Gastrocnemius medialis (tissue), 4 donors: ENCODE measurements at regions of chr17 and their contacts with region 1.

Region 1: DNA sequence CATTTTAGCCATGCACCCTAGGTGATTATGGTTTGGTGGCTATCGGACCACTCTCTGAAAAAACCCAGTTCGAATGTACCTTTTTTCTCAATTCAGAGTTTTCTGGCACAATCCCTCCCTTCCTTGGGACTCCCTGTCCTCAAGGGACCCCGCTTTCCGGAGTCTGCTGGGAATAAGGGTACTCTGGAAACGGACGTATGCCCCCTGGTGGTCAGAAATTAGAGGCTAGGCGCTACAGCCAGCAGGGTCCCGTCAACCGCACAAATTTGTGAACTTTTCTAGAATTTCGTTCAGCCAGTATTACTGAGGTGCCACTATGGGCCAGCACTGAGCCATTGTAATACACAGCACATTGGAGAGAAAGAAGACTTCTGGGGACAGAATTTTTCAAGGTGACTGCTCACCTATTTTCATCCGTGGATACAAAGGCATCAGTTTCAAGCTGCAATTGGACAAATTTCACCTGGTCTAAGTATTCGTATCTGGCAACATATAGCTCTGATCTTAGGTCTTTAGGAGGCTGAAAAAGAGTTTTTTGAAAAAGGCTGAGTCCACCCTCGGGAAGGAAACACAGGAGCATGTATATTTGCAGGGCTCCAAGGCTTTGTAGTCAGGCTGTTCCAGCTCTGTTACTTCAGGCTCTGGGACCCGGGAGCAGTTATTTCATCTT is 27.1 kb upstream of the CRYBA1 start:
- DNase-seq: peak; percentile 26 to 49
- ATAC-seq: peak; percentile 77 to 80
- H3K4me3 ChIP-seq: no peak overlapping the region
- H3K27ac ChIP-seq: no peak overlapping the region
- H3K4me1 ChIP-seq: peaks cover 6 to 10% of the 10 kb centered on the region in 2 donors
- H3K27me3 ChIP-seq: no peaks in the 10 kb centered on the region
- CTCF ChIP-seq: peak; percentile 77 to 93 (median 89)
- POLR2A ChIP-seq: no peak

Region 2: DNA sequence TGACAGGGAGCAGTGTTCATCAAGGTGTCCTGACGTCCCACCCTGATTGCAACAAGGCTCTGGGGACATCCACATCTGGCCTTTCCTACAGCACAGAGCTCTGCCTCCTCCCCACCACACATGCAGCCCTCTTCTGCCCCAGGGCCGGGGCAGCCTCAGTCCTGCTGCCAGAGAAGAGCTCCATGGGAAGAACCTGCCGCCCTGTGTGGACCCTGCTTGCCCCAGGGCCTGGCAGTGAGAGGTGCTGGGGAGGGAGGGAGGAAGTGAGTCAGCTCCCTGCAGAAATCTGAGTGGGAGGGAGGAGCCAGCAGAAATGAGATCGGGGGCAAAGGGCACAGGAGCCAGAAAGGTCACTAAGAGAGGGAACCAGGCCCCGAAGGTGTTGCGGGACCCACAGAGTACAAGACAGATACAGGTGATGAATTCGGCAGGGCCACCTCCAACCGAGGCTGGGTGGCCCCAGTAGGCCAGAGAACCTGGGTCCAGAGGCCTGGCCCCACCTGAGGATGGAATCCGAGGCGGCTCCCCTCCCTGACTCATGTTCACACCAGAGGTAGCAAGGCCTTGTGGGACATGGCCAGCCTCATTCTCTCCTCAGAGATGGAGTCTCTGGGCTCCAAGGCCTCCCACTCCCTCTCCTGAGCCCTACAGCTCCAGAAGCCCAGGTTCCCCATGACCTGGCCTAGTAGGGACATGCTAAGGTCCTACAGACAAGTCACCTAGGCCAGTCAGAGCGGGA is 64.1 kb before region 1 on chr17:
- in situ Hi-C with region 1: loop called in 1 of 4 experiments (anchors 10 kb)
- intact Hi-C with region 1: no loop called
- DNase-seq: no peak
- ATAC-seq: peak; percentile 63 to 85
- H3K4me3 ChIP-seq: peak overlapping the region in 1 of 4 donors; percentile 44
- H3K27ac ChIP-seq: peak overlapping the region; percentile 69 to 72 (median 70)
- H3K4me1 ChIP-seq: peaks cover 25 to 32% of the 10 kb centered on the region in 2 donors
- H3K27me3 ChIP-seq: no peaks in the 10 kb centered on the region
- CTCF ChIP-seq: no peak
- POLR2A ChIP-seq: no peak